ENCODE measurements at regions of chr2 and their contacts with region 1.

Region 1: GRCh38 chr2:222561817-222562645 is 93.9 kb downstream of the FARSB start:
- DNase-seq: peak; percentile 39
- H3K4me3 ChIP-seq: no peak overlapping the region
- H3K27ac ChIP-seq: no peak overlapping the region
- H3K4me1 ChIP-seq: no peaks in the 10 kb centered on the region
- H3K27me3 ChIP-seq: no peaks in the 10 kb centered on the region
- CTCF ChIP-seq: peak; percentile 51 to 83

Region 2: DNA sequence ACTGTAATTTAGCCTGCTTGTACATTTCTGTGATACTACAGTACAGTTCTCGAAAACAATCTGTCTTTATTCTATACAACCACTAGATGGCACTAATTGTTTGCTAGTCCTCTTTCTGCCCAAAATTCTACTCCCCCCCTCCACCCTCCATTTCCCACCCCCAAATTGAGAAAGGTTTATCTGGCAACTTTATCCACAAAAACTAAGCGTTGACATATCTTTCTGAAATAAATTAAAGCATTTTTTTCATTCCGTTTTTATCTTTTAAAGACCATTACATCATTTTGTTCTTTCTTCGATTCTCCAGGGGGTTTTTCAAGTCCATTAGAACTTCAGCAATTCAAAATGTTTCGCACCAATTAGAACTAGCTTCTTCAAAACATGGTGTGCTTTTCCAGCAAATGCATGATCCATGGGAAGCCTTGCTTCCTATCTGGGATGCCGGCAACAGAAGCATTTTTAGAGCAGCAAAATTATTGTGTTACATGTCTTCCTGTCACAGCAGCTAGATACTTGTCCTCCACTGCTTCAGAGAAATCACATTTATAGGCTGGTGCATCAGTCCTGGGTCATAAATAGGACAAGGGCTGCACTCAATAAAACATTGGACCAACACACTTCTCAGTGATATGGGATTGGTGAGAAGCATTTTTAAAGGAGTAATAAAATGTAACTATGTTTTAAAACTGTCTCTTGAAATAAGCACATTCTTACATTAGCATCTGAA is 504.5 kb before region 1 on chr2:
- CTCF ChIA-PET with region 1: no interaction called
- dilution Hi-C with region 1: no loop called
- in situ Hi-C with region 1: loop called in 1 of 2 experiments (anchors 25 kb)
- intact Hi-C with region 1: loop called (anchors 1 kb)
- DNase-seq: no peak
- H3K4me3 ChIP-seq: no peak overlapping the region
- H3K27ac ChIP-seq: no peak overlapping the region
- H3K4me1 ChIP-seq: no peaks in the 10 kb centered on the region
- H3K27me3 ChIP-seq: peaks cover 5% of the 10 kb centered on the region
- CTCF ChIP-seq: peak; percentile 54 to 62

Region 3: GRCh38 chr2:222336439-222336838 is 225.6 kb before region 1 on chr2:
- CTCF ChIA-PET with region 1: no interaction called
- dilution Hi-C with region 1: no loop called
- in situ Hi-C with region 1: no loop called
- intact Hi-C with region 1: loop called (anchors 5 kb)
- DNase-seq: no peak
- H3K4me3 ChIP-seq: no peak overlapping the region
- H3K27ac ChIP-seq: no peak overlapping the region
- H3K4me1 ChIP-seq: no peaks in the 10 kb centered on the region
- H3K27me3 ChIP-seq: no peaks in the 10 kb centered on the region
- CTCF ChIP-seq: peak in 1 of 2 donors; percentile 29

Region 4: DNA sequence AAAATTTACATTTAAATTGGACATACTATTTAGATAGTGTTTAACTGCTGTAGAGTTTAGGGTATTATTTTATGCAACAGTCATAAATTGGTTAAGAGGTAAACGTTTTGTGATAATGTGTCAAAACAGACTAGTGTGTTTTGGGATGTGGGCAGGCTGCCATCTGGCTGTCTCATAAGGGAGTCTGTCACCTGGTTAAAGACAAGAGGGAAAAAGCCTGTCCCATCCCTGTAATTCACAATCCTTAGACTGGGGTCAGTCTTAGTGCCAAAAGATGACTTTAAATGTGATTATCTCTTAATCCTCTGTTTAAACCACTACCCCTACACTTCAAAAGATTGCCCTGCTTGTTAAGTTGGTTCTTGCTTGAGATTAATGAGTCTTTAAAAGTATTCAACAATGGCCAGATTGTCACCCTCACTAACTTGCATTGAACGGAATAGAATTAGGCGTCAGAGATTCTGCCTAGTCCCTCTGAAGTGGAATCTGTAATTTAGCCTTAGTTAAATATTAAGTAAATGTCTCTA is 78.5 kb before region 1 on chr2:
- CTCF ChIA-PET with region 1: no interaction called
- dilution Hi-C with region 1: no loop called
- in situ Hi-C with region 1: no loop called
- intact Hi-C with region 1: loop called (anchors 2 kb)
- DNase-seq: no peak
- H3K4me3 ChIP-seq: no peak overlapping the region
- H3K27ac ChIP-seq: no peak overlapping the region
- H3K4me1 ChIP-seq: no peaks in the 10 kb centered on the region
- H3K27me3 ChIP-seq: no peaks in the 10 kb centered on the region
- CTCF ChIP-seq: no peak

Region 5: GRCh38 chr2:222792001-222792611 is 230.1 kb after region 1 on chr2:
- CTCF ChIA-PET with region 1: no interaction called
- dilution Hi-C with region 1: no loop called
- in situ Hi-C with region 1: no loop called
- intact Hi-C with region 1: no loop called
- DNase-seq: no peak
- H3K4me3 ChIP-seq: no peak overlapping the region
- H3K27ac ChIP-seq: no peak overlapping the region
- H3K4me1 ChIP-seq: peaks cover 20% of the 10 kb centered on the region
- H3K27me3 ChIP-seq: no peaks in the 10 kb centered on the region
- CTCF ChIP-seq: no peak

Measured in mammary epithelial cell (primary cell).